Psoas muscle (tissue), 8 donors: ENCODE measurements at regions of chr19 and their contacts with region 1.

Region 1: GRCh38 chr19:42450314-42450934 is 7.7 kb upstream of the CXCL17 start:
- DNase-seq: peak; percentile 70 to 77
- ATAC-seq: peak; percentile 57 to 78 (median 78)
- H3K4me3 ChIP-seq: no peak overlapping the region
- H3K27ac ChIP-seq: peak overlapping the region; percentile 41
- H3K4me1 ChIP-seq: no peaks in the 10 kb centered on the region
- H3K27me3 ChIP-seq: peaks cover 0 to 6% (median 3%) of the 10 kb centered on the region in 3 donors
- CTCF ChIP-seq: peak; percentile 87

Region 2: DNA sequence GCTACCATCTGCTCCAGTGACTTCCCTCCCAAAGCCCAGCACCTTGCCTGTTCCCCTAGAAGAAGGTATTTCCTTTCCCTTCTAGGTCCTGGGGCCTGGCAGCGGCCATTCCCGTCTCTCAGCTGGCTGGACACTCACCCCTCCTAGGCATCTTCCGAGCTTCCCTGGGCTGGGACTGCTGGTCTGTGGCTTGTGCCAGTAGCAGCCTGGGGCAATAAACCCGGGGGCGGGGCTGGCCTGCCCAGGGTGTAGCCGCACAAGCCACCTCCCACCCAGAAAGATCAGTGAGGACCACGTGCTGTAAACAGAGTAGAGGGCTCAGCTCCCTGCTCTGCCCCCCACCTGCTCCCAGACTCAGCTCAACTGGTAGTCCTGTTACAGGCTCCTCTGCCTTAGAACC is 38.2 kb before region 1 on chr19:
- intact Hi-C with region 1: no loop called
- DNase-seq: peak in 1 of 2 donors; percentile 64
- ATAC-seq: peak; percentile 47 to 75 (median 72)
- H3K4me3 ChIP-seq: no peak overlapping the region
- H3K27ac ChIP-seq: no peak overlapping the region
- H3K4me1 ChIP-seq: no peaks in the 10 kb centered on the region
- H3K27me3 ChIP-seq: peaks cover 0 to 1% (median 0%) of the 10 kb centered on the region in 3 donors
- CTCF ChIP-seq: no peak

Region 3: DNA sequence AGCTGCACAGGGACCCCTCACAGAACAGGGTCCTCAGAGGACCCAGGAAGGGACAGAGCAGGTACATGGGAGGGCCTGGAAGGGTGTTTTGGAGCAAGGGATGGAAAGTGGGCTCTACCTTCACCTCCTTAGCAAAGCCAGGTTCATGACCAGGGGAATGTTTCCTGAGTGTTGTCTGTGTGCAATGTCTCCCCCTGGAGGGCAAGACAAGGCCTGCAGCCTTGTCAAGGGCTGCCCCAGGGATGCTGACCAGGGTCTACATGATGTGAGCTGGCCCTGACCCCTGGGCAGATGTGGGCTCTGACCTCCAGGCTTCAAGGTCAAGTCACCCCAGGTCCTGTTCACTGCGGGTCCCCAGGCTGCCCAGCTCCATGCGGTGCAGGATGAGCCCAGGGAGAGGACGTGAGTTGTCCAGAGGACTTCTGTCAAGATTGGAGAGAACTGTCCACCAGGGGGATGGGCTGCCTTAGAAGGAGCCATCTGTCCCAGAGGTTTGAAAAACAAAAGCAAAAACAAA is 78.9 kb after region 1 on chr19:
- intact Hi-C with region 1: loop called (anchors 2 to 5 kb)
- DNase-seq: peak; percentile 38 to 62
- ATAC-seq: peak; percentile 31 to 55 (median 40)
- H3K4me3 ChIP-seq: peak overlapping the region; percentile 48
- H3K27ac ChIP-seq: peak overlapping the region; percentile 46
- H3K4me1 ChIP-seq: no peaks in the 10 kb centered on the region
- H3K27me3 ChIP-seq: no peaks in the 10 kb centered on the region
- CTCF ChIP-seq: peak; percentile 58

Region 4: GRCh38 chr19:42596391-42597072 is 146.1 kb after region 1 on chr19:
- intact Hi-C with region 1: loop called in 1 of 2 experiments (anchors 5 kb)
- DNase-seq: peak in 1 of 2 donors; percentile 34
- ATAC-seq: peak in 3 of 4 donors; percentile 53 to 59 (median 58)
- H3K4me3 ChIP-seq: no peak overlapping the region
- H3K27ac ChIP-seq: no peak overlapping the region
- H3K4me1 ChIP-seq: no peaks in the 10 kb centered on the region
- H3K27me3 ChIP-seq: no peaks in the 10 kb centered on the region
- CTCF ChIP-seq: peak; percentile 79

Region 5: GRCh38 chr19:42606660-42607351 is 156.4 kb after region 1 on chr19:
- intact Hi-C with region 1: no loop called
- DNase-seq: peak in 1 of 2 donors; percentile 37
- ATAC-seq: no peak
- H3K4me3 ChIP-seq: no peak overlapping the region
- H3K27ac ChIP-seq: no peak overlapping the region
- H3K4me1 ChIP-seq: no peaks in the 10 kb centered on the region
- H3K27me3 ChIP-seq: no peaks in the 10 kb centered on the region
- CTCF ChIP-seq: peak; percentile 11